ENCODE measurements at regions of chr2 and their contacts with region 1.

Region 1: DNA sequence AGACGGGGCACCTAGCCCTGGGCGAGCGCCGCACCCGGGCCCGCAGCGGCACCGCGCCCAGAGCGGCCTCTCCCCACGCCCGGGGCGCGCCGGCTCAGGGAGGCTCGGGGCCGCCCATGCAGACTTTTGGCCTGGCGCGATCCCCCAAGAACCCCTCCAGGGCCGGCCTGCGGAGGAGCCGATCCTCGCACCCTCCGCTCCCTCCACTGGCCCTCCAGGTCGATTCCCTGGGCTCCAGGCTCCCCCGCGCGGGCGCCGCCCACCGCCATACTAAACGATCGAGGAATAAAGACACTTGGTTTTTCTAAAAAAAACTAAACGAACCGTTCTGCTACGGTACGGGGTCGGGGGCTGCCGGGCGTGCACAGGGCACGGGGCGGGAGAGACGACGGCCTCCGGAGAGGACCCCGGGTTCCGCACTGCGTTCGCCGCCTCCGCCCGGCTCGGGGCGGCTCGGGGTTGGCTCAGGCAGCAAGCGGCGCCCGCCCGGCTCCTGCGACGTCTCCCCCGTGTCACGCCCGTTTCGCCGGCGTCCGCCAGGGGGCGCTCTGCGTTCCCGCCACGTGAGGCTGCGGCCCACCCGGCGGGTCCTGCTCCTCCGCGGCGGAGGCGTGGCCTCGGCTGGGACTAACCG is 365 bp upstream of the KHK start:
- DNase-seq: peak; percentile 93 to 99 (median 98)
- H3K4me3 ChIP-seq: peak overlapping the region; percentile 11 to 75
- H3K4me3 Mint-ChIP-seq: peak overlapping the region; percentile 82 to 90 (median 86)
- H3K27ac ChIP-seq: peak overlapping the region; percentile 80
- H3K27ac Mint-ChIP-seq: peak overlapping the region; percentile 82 to 94 (median 89)
- H3K4me1 ChIP-seq: peaks cover 32% of the 10 kb centered on the region
- H3K4me1 Mint-ChIP-seq: peaks cover 9 to 37% (median 23%) of the 10 kb centered on the region in 4 donors
- H3K27me3 ChIP-seq: no peaks in the 10 kb centered on the region
- H3K27me3 Mint-ChIP-seq: no peaks in the 10 kb centered on the region

Region 2: DNA sequence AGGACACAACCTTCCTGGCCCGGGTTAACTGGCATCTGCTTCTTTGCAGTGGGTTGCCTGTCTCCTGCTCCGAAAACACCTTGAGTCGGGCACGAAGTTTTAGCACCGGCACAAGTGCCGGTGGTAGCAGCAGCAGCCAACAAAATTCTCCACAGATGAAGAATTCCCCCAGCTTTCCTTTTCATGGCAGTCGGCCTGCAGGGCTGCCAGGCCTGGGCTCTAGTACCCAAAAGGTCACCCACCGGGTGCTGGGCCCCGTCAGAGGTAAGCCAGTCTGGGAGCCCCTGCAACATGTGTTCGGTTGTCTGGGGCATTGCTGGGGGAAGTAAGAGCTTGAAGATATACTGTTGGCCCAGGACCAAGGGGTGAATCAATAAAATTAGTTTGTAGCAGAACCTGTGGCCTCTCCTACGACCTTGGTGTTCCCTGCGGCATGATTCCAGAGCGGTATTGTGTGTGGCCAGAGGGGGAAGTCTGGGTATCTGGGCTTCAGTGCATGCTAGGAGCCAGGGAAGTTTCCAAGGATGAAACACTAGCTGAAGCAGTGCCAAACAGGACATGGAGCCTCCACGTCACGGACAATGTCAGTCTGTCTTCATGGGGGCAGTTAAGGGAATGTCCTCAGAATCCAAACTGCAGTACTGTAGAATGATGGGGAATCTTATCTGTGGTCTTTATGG is 26.9 kb before region 1 on chr2:
- CTCF ChIA-PET with region 1: interaction called, 6 read pairs
- POLR2A ChIA-PET with region 1: interaction called, 402 read pairs
- intact Hi-C with region 1: no loop called
- DNase-seq: no peak
- H3K4me3 ChIP-seq: no peak overlapping the region
- H3K4me3 Mint-ChIP-seq: no peak overlapping the region
- H3K27ac ChIP-seq: no peak overlapping the region
- H3K27ac Mint-ChIP-seq: peak overlapping the region in 4 of 7 donors; percentile 22 to 72 (median 57)
- H3K4me1 ChIP-seq: no peaks in the 10 kb centered on the region
- H3K4me1 Mint-ChIP-seq: peaks cover 0 to 11% (median 7%) of the 10 kb centered on the region in 4 donors
- H3K27me3 ChIP-seq: no peaks in the 10 kb centered on the region
- H3K27me3 Mint-ChIP-seq: no peaks in the 10 kb centered on the region

Region 3: DNA sequence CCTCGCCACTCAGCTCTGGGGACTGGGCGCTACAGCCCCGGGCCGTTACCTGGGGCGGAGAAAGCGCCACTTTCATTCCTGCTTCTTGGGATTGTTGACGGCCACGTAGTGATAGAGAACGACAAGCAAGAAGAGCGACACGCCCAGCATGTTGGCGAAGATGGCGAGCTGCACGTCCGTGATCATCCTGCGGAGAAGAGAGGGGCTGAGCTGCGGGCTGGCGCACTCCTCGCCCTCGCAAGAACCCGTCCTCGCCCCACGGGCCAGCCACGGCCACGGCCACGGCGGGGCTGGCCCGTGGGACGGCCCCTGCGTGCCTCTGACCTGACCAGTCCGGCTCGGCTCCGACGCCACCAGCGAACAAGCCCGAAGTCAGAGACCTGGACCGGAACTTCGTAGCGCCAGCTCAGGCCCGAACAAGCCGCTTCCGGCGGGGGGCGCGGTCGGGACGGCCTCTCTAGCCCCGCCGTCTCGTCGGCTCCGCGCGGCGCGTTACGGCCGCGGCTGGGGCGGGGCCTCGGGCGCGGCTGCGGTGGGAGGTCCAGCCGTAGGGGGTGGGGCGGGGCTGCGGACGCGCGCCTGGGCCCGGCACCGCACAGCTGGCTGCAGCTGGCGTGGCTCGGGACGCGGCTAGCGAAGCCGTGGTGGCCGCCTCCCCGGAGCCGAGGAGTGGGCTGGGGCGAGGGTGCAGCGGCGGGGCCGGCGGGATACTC is 14.8 kb before region 1 on chr2 and contains the start of gene OST4:
- CTCF ChIA-PET with region 1: interaction called, 46 read pairs
- POLR2A ChIA-PET with region 1: interaction called, 187 read pairs
- intact Hi-C with region 1: loop called (anchors 1 kb)
- DNase-seq: peak; percentile 87 to 91 (median 89)
- H3K4me3 ChIP-seq: peak within 1 kb of the TSS; percentile 95 to 97
- H3K4me3 Mint-ChIP-seq: peak within 1 kb of the TSS; percentile 92 to 98 (median 97)
- H3K27ac ChIP-seq: peak within 1 kb of the TSS; percentile 95
- H3K27ac Mint-ChIP-seq: peak within 1 kb of the TSS; percentile 93 to 99 (median 98)
- H3K4me1 ChIP-seq: peaks cover 62% of the 10 kb centered on the region
- H3K4me1 Mint-ChIP-seq: peaks cover 44 to 86% (median 70%) of the 10 kb centered on the region in 4 donors
- H3K27me3 ChIP-seq: no peaks in the 10 kb centered on the region
- H3K27me3 Mint-ChIP-seq: no peaks in the 10 kb centered on the region
- total RNA-seq, gene OST4: 269 to 296 TPM

Region 4: GRCh38 chr2:27211829-27212627 is 125.8 kb after region 1 on chr2 and contains the starts of genes ATRAID and SLC5A6:
- CTCF ChIA-PET with region 1: no interaction called
- POLR2A ChIA-PET with region 1: interaction called, 8 read pairs
- intact Hi-C with region 1: loop called (anchors 1 kb)
- DNase-seq: peak; percentile 89 to 93 (median 92)
- H3K4me3 ChIP-seq: peak within 1 kb of the TSS; percentile 71 to 94
- H3K4me3 Mint-ChIP-seq: peak within 1 kb of the TSS; percentile 95 to 100 (median 100)
- H3K27ac ChIP-seq: peak within 1 kb of the TSS; percentile 99
- H3K27ac Mint-ChIP-seq: peak within 1 kb of the TSS; percentile 97 to 100 (median 100)
- H3K4me1 ChIP-seq: peaks cover 22% of the 10 kb centered on the region
- H3K4me1 Mint-ChIP-seq: peaks cover 23 to 37% (median 31%) of the 10 kb centered on the region in 4 donors
- H3K27me3 ChIP-seq: no peaks in the 10 kb centered on the region
- H3K27me3 Mint-ChIP-seq: no peaks in the 10 kb centered on the region
- total RNA-seq, gene ATRAID: 103 to 109 TPM
- total RNA-seq, gene SLC5A6: 21.9 to 25.1 TPM